Panc1 (cell line): ENCODE measurements at regions of chr11 and their contacts with region 1.

Region 1: DNA sequence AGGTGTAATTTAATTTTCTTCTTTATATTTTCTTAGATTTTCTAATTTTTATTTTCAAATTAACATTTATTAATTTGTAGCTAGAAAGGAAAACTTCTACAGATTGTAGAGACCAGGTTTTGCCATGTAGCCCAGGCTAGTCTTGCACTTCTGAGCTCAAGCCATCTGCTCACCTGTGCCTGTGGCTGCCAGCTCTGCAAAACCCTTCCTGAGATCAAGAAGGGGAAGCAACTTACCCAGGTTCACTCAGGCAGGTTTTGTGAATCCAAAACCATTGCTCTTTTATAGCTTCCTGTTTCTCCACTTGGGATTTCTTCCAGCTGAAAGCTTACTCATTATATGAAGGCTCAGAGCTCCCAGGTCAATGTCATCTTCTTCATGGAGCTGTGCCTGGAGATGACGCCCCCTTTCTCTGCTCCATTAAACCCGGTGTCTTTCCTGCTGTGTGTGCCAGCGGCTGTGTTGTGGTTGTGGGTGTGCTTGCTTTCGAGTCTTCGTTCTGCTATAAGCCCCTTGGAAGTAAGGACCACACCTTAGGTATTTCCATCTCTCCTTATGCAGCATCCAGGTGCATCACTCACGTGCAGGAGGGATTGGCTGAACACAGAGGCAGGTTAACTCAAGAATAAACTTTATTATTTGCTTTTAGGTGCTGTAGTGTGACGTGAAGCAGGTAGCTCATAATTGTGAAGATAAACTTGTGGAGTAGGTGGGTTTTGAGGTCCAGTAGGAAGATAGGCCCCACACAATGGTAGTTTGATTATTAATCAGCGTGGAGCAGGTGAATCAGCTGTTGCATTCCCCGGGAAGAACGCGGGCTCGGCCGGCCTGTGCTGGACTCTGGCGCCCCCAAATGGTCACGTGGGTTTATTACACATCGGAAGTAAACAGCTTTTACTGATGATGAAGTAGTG is 42.2 kb upstream of the INCENP start:
- DNase-seq: peak; percentile 39
- ATAC-seq: peak; percentile 96
- H3K4me3 ChIP-seq: peak overlapping the region in 1 of 2 experiments; percentile 25; a peak in 2 of 4 replicates
- H3K27ac ChIP-seq: no peak overlapping the region
- H3K4me1 ChIP-seq: peaks cover 5% of the 10 kb centered on the region; the same call in 1 of the 2 replicates
- H3K27me3 ChIP-seq: no peaks in the 10 kb centered on the region
- CTCF ChIP-seq: peak; percentile 97

Region 2: GRCh38 chr11:61899146-61899841 is 182.3 kb before region 1 on chr11:
- CTCF ChIA-PET with region 1: interaction called, 72 read pairs
- POLR2A ChIA-PET with region 1: no interaction called
- in situ Hi-C with region 1: no loop called
- intact Hi-C with region 1: loop called (anchors 2 kb)
- DNase-seq: peak; percentile 41
- ATAC-seq: peak; percentile 86
- H3K4me3 ChIP-seq: no peak overlapping the region
- H3K27ac ChIP-seq: no peak overlapping the region
- H3K4me1 ChIP-seq: no peaks in the 10 kb centered on the region
- H3K27me3 ChIP-seq: no peaks in the 10 kb centered on the region
- CTCF ChIP-seq: peak; percentile 99

Region 3: DNA sequence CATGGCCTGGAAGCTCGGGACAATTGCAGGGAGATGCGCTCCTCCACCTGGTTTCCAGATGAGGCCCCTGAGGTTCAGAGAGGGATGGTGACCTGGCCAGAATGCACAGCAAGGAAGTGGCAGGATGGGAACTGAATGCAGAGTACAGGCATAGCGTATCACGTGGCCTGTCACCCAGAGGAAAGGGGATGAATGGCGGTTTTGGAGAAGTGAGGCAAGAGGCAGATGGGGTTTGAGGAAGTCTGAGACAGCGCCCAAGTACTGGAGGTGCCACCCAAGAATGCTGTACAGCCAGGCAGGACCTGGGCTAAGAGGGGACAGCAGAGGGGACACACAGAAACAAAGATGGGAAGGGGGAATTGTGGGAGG is 169.1 kb before region 1 on chr11:
- CTCF ChIA-PET with region 1: interaction called, 3 read pairs
- POLR2A ChIA-PET with region 1: interaction called, 19 read pairs
- in situ Hi-C with region 1: no loop called
- intact Hi-C with region 1: no loop called
- DNase-seq: no peak
- ATAC-seq: no peak
- H3K4me3 ChIP-seq: no peak overlapping the region
- H3K27ac ChIP-seq: no peak overlapping the region
- H3K4me1 ChIP-seq: no peaks in the 10 kb centered on the region
- H3K27me3 ChIP-seq: no peaks in the 10 kb centered on the region
- CTCF ChIP-seq: no peak

Region 4: GRCh38 chr11:61947486-61948210 is 134.0 kb before region 1 on chr11:
- CTCF ChIA-PET with region 1: interaction called, 21 read pairs
- POLR2A ChIA-PET with region 1: no interaction called
- in situ Hi-C with region 1: no loop called
- intact Hi-C with region 1: loop called (anchors 5 kb)
- DNase-seq: no peak
- ATAC-seq: peak; percentile 86
- H3K4me3 ChIP-seq: no peak overlapping the region
- H3K27ac ChIP-seq: no peak overlapping the region
- H3K4me1 ChIP-seq: 0 out of 2 replicates have a peak, but pooled peaks cover 4% of the 10 kb centered on the region
- H3K27me3 ChIP-seq: no peaks in the 10 kb centered on the region; the same call in 1 of the 2 replicates
- CTCF ChIP-seq: peak; percentile 96

Region 5: DNA sequence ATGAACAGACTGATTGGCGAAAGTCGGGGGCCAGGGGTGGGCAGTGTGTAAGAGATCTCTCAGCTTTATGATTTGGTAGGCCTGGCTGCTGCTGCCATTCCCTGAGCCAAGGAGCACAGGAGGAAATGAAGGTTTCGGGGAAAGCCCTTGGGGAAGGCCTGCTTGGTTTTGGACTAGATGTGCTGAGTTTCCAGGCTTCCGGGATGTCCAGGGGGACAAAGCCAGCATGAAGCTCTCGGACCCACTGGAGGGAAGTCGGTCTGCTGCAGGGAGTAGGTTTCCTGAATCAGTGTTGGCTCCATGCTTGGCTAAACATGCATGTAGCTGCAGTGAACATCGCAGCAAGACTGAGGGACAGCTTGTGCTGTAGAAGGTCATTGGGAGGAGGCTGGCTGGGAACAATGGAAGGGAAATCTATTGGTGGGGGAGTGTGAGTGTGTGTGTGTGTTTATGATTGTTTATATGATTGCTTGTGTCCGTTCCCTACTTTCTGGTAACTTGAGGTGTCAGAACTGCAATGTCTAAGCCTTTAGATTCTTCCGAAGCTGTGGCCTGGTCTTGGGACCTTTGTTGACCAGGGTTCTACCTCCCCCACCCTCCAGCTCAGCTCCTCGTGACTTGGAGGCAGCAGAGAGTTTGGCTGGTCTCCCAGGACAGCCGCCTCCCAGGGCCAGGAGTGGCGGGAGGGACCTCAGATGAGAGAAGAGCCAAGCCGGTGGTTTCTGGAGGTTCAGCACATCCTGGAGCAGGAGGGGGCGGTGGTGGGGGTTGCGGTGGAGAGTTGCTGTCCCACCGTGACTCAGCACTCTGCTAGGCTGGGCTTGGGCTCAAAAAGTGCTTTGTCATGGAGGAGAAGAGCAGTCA is 110.2 kb before region 1 on chr11:
- CTCF ChIA-PET with region 1: interaction called, 8 read pairs
- POLR2A ChIA-PET with region 1: interaction called, 3 read pairs
- in situ Hi-C with region 1: no loop called
- intact Hi-C with region 1: loop called (anchors 1 kb)
- DNase-seq: peak; percentile 91
- ATAC-seq: peak; percentile 75
- H3K4me3 ChIP-seq: 0 out of 4 replicates have a peak overlapping the region, but pooled peaks of 1 of the 2 experiments have one; percentile 10
- H3K27ac ChIP-seq: peak overlapping the region; percentile 85
- H3K4me1 ChIP-seq: peaks cover 54% of the 10 kb centered on the region
- H3K27me3 ChIP-seq: no peaks in the 10 kb centered on the region
- CTCF ChIP-seq: no peak

Region 6: DNA sequence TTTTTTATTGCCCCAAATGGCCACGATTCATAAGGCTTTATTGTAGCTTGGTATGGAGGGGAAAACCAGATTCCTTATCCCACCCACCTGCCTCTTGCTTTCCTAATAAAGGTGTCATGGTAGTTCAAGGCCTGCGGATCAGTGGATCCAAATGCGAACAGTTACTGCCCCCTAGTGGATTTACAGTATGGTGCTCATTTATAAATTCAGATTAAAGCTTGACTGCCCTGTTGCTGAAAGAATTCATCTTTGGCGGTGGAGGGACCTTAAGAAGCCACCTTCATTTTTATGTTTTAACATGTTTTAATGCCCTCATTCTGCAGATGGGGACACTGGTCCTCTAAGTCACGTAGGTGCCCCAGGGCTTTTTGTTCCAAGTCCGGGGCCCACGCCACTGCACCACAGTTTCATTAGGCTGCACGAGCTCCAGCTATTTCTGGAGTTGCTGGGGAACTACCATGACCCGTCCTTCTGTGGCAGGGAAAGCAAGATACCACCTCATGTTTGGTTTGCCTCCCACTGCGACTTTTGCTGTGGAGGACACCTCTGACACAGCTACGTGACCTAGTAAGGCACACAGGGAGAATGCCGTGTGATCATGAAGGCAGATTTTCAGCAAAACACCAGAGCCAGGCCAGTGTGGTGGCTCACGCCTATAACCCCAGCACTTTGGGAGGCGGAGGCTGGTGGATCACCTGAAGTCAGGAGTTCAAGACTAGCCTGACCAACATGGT is 26.5 kb after region 1 on chr11:
- CTCF ChIA-PET with region 1: interaction called, 27 read pairs
- POLR2A ChIA-PET with region 1: no interaction called
- in situ Hi-C with region 1: no loop called
- intact Hi-C with region 1: no loop called
- DNase-seq: peak; percentile 52
- ATAC-seq: peak; percentile 83
- H3K4me3 ChIP-seq: no peak overlapping the region
- H3K27ac ChIP-seq: no peak overlapping the region
- H3K4me1 ChIP-seq: peaks cover 6% of the 10 kb centered on the region; the same call in 1 of the 2 replicates
- H3K27me3 ChIP-seq: no peaks in the 10 kb centered on the region
- CTCF ChIP-seq: peak; percentile 87

Region 7: GRCh38 chr11:62157603-62158002 is 76.0 kb after region 1 on chr11:
- CTCF ChIA-PET with region 1: no interaction called
- POLR2A ChIA-PET with region 1: no interaction called
- in situ Hi-C with region 1: no loop called
- intact Hi-C with region 1: no loop called
- DNase-seq: no peak
- ATAC-seq: peak; percentile 53; the same call in 1 of the 2 replicates
- H3K4me3 ChIP-seq: no peak overlapping the region
- H3K27ac ChIP-seq: no peak overlapping the region
- H3K4me1 ChIP-seq: no peaks in the 10 kb centered on the region
- H3K27me3 ChIP-seq: no peaks in the 10 kb centered on the region
- CTCF ChIP-seq: no peak